MCF 10A (cell line): ENCODE measurements at regions of chr18 and their contacts with region 1.

Region 1: GRCh38 chr18:74196220-74197119 is 48.1 kb downstream of the TIMM21 start:
- DNase-seq: peak; percentile 75
- H3K4me3 Mint-ChIP-seq: peak overlapping the region; percentile 70
- H3K27ac Mint-ChIP-seq: no peak overlapping the region
- H3K4me1 Mint-ChIP-seq: peaks cover 5% of the 10 kb centered on the region
- H3K27me3 Mint-ChIP-seq: peaks cover 25% of the 10 kb centered on the region
- CTCF ChIP-seq: peak; percentile 82

Region 2: GRCh38 chr18:72762515-72763122 is 1433.9 kb before region 1 on chr18:
- CTCF ChIA-PET with region 1: interaction called, 3 read pairs
- POLR2A ChIA-PET with region 1: no interaction called
- intact Hi-C with region 1: loop called (anchors 5 kb)
- DNase-seq: peak; percentile 81
- H3K4me3 Mint-ChIP-seq: no peak overlapping the region
- H3K27ac Mint-ChIP-seq: no peak overlapping the region
- H3K4me1 Mint-ChIP-seq: no peaks in the 10 kb centered on the region
- H3K27me3 Mint-ChIP-seq: no peaks in the 10 kb centered on the region
- CTCF ChIP-seq: peak; percentile 71

Region 3: GRCh38 chr18:74291771-74292540 is 95.5 kb after region 1 on chr18 and contains the start of gene CYB5A:
- CTCF ChIA-PET with region 1: interaction called, 9 read pairs
- POLR2A ChIA-PET with region 1: no interaction called
- intact Hi-C with region 1: loop called (anchors 1 kb)
- DNase-seq: peak; percentile 95
- H3K4me3 Mint-ChIP-seq: peak within 1 kb of the TSS; percentile 96
- H3K27ac Mint-ChIP-seq: peak within 1 kb of the TSS; percentile 65
- H3K4me1 Mint-ChIP-seq: peaks cover 4% of the 10 kb centered on the region
- H3K27me3 Mint-ChIP-seq: no peaks in the 10 kb centered on the region
- CTCF ChIP-seq: peak; percentile 28
- total RNA-seq, gene CYB5A: 19.4 and 27.5 TPM in 2 replicates

Region 4: GRCh38 chr18:74337155-74337911 is 140.9 kb after region 1 on chr18:
- CTCF ChIA-PET with region 1: interaction called, 89 read pairs
- POLR2A ChIA-PET with region 1: interaction called, 4 read pairs
- intact Hi-C with region 1: loop called (anchors 1 kb)
- DNase-seq: no peak
- H3K4me3 Mint-ChIP-seq: no peak overlapping the region
- H3K27ac Mint-ChIP-seq: no peak overlapping the region
- H3K4me1 Mint-ChIP-seq: no peaks in the 10 kb centered on the region
- H3K27me3 Mint-ChIP-seq: peaks cover 20% of the 10 kb centered on the region
- CTCF ChIP-seq: no peak

Region 5: GRCh38 chr18:74353169-74353775 is 156.8 kb after region 1 on chr18:
- CTCF ChIA-PET with region 1: interaction called, 17 read pairs
- POLR2A ChIA-PET with region 1: no interaction called
- intact Hi-C with region 1: no loop called
- DNase-seq: peak; percentile 61
- H3K4me3 Mint-ChIP-seq: no peak overlapping the region
- H3K27ac Mint-ChIP-seq: no peak overlapping the region
- H3K4me1 Mint-ChIP-seq: no peaks in the 10 kb centered on the region
- H3K27me3 Mint-ChIP-seq: peaks cover 40% of the 10 kb centered on the region
- CTCF ChIP-seq: peak; percentile 55

Region 6: DNA sequence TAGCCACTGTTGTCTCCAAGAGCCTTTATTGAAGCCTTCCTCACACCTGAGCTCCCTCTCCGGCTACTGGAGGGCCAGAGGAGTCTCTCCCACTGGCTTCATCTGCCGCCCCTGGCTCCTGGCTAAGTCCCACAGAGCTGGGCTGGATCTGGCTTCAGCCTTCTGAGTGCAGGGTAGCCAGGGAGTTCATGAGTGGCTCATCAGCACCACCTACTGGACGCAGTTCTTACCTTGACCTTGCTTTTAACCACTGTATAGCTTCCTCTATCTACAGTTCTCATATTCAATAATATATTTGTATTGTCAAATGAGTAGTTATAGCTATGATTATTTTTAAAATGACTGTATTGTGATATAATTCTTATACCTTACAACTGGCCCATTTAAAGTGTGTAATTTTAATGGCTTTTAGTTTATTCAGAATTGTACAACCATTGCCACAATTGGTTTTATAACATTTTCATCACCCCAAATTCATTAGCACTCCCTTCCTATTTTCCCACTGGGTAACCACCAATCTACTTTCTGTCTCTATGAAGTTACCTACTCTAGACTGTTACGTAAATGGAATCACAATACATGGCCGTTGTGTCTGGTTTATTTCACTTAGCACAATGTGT is 355.6 kb after region 1 on chr18:
- CTCF ChIA-PET with region 1: interaction called, 19 read pairs
- POLR2A ChIA-PET with region 1: no interaction called
- intact Hi-C with region 1: loop called (anchors 1 kb)
- DNase-seq: peak; percentile 84
- H3K4me3 Mint-ChIP-seq: no peak overlapping the region
- H3K27ac Mint-ChIP-seq: no peak overlapping the region
- H3K4me1 Mint-ChIP-seq: peaks cover 5% of the 10 kb centered on the region
- H3K27me3 Mint-ChIP-seq: peaks cover 40% of the 10 kb centered on the region
- CTCF ChIP-seq: peak; percentile 82